CD14-positive monocyte (primary cell): ENCODE measurements at regions of chr20 and their contacts with region 1.

Region 1: DNA sequence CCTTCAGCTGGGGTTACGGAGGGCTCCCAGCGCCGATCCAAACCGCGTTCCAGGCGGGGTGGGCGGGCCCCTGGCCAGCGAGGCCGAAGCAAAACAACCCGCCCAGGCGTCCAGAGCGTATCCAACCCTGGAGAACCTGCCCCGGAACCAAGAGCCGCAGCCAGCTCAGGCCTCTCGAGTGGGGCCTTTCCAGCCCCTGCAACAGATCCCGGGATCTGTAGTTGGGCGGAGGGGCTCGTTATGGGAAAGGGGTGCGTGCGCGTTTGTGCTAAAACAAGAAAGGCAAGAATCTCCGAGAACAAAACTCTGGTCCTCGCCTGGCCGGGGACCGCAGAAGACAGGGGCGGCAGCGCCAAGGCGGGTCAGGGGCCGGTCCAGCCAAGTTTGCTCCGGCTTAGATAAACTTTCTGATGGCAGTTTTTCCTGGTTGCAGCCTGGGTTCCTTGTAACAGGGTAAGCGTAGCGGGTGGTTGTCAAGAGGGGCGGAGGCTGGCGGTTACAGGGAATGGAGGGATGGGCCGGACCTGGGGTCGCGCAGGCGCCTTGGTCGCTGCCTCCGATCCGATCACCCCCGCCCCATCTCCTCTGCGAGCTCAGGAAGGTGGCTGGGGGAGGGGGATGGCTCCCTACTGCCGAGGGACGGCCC is 448 bp upstream of the RIN2 start:
- DNase-seq: peak; percentile 73 to 85 (median 84)
- H3K4me3 ChIP-seq: peak overlapping the region; percentile 58 to 88 (median 66)
- H3K4me3 Mint-ChIP-seq: peak overlapping the region; percentile 94 to 98
- H3K27ac ChIP-seq: peak overlapping the region; percentile 94 to 97
- H3K27ac Mint-ChIP-seq: peak overlapping the region; percentile 89 to 98 (median 94)
- H3K4me1 ChIP-seq: peaks cover 35 to 39% of the 10 kb centered on the region in 2 donors
- H3K4me1 Mint-ChIP-seq: peaks cover 36% of the 10 kb centered on the region
- H3K27me3 ChIP-seq: no peaks in the 10 kb centered on the region
- H3K27me3 Mint-ChIP-seq: peaks cover 3 to 8% (median 4%) of the 10 kb centered on the region in 3 donors
- CTCF ChIP-seq: no peak

Region 2: GRCh38 chr20:19699180-19699971 is 58.2 kb before region 1 on chr20:
- intact Hi-C with region 1: loop called in 1 of 2 experiments (anchors 5 kb)
- DNase-seq: peak in 2 of 3 donors; percentile 16 to 57
- H3K4me3 ChIP-seq: no peak overlapping the region
- H3K4me3 Mint-ChIP-seq: no peak overlapping the region
- H3K27ac ChIP-seq: no peak overlapping the region
- H3K27ac Mint-ChIP-seq: peak overlapping the region in 1 of 7 donors; percentile 5
- H3K4me1 ChIP-seq: peaks cover 32 to 36% of the 10 kb centered on the region in 2 donors
- H3K4me1 Mint-ChIP-seq: peaks cover 38% of the 10 kb centered on the region
- H3K27me3 ChIP-seq: no peaks in the 10 kb centered on the region
- H3K27me3 Mint-ChIP-seq: peaks cover 0 to 9% (median 2%) of the 10 kb centered on the region in 3 donors
- CTCF ChIP-seq: no peak

Region 3: DNA sequence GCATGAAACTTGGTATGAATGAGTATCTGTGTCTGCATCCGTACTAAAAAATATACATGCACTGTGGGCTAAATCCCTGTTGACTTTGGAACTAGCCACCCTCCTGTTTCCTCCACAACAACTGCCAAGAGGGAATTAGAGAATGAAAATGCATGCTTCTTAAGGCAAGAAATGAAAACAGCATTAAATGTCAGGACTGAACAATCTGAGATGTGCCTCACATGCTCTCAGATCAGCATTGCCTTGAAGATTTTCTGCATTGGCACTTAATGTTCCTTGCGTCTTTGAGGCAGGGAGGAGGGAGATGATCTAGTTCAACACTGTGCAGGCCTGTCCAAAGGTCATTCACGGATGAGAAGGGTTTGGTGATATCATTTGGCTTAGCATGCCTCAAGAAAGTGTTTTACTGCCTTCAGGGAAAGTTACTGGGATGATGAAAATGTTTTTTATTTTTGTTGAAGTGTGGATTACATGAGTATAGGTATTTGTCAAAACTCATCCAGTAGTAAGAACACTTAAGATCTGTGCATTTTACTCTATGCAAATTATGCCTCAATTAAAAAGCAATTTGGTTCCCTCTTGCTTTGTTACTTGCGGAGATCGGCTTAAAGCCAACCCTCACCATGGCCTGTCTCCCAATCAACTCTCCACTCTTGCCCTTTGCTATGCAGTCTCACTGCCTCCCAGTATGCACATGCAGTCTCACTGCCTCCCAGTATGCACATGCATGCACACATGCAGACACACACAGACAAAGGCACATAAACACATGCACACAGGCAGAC is 47.1 kb before region 1 on chr20:
- intact Hi-C with region 1: no loop called
- DNase-seq: no peak
- H3K4me3 ChIP-seq: no peak overlapping the region
- H3K4me3 Mint-ChIP-seq: no peak overlapping the region
- H3K27ac ChIP-seq: no peak overlapping the region
- H3K27ac Mint-ChIP-seq: no peak overlapping the region
- H3K4me1 ChIP-seq: peaks cover 19 to 21% of the 10 kb centered on the region in 2 donors
- H3K4me1 Mint-ChIP-seq: no peaks in the 10 kb centered on the region
- H3K27me3 ChIP-seq: no peaks in the 10 kb centered on the region
- H3K27me3 Mint-ChIP-seq: peaks cover 0 to 2% (median 1%) of the 10 kb centered on the region in 3 donors
- CTCF ChIP-seq: no peak

Region 4: DNA sequence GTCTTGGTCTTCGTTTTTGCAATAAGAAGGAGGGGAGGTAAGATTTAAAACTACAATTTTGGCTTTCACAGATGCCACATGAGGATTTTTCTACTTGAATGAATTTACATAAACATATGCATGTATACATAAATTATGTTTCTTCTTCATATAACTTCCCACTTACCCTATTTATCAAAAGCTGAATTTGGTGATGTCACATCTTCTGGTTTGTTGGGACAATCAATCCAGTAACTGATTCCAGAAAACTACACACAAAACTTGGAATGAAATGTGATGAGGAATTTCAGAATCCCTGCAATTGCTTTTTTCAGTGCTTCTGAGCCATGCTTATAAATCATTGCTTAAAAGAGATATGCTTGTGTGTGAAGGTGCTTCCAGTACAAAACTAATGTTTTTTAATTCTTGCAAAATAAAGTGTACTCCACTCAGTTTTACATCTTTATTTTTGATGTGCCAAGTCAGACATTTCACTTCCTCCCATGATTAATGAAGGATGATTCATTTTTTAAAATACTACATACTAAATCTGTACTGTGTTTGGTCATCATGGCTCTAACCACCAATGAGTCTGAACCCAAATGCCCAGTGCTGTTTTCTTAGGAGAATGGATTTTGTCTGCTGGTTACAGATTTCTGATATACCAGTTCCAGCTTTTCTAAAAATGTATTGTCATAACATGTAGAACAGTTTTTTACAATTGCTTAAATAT is 31.6 kb before region 1 on chr20:
- intact Hi-C with region 1: loop called in 1 of 2 experiments (anchors 5 kb)
- DNase-seq: peak; percentile 59 to 80 (median 78)
- H3K4me3 ChIP-seq: no peak overlapping the region
- H3K4me3 Mint-ChIP-seq: no peak overlapping the region
- H3K27ac ChIP-seq: peak overlapping the region in 1 of 2 donors; percentile 70
- H3K27ac Mint-ChIP-seq: peak overlapping the region; percentile 31 to 83 (median 74)
- H3K4me1 ChIP-seq: peaks cover 28 to 33% of the 10 kb centered on the region in 2 donors
- H3K4me1 Mint-ChIP-seq: peaks cover 32% of the 10 kb centered on the region
- H3K27me3 ChIP-seq: no peaks in the 10 kb centered on the region
- H3K27me3 Mint-ChIP-seq: peaks cover under 1 to 5% (median 3%) of the 10 kb centered on the region in 3 donors
- CTCF ChIP-seq: no peak

Region 5: DNA sequence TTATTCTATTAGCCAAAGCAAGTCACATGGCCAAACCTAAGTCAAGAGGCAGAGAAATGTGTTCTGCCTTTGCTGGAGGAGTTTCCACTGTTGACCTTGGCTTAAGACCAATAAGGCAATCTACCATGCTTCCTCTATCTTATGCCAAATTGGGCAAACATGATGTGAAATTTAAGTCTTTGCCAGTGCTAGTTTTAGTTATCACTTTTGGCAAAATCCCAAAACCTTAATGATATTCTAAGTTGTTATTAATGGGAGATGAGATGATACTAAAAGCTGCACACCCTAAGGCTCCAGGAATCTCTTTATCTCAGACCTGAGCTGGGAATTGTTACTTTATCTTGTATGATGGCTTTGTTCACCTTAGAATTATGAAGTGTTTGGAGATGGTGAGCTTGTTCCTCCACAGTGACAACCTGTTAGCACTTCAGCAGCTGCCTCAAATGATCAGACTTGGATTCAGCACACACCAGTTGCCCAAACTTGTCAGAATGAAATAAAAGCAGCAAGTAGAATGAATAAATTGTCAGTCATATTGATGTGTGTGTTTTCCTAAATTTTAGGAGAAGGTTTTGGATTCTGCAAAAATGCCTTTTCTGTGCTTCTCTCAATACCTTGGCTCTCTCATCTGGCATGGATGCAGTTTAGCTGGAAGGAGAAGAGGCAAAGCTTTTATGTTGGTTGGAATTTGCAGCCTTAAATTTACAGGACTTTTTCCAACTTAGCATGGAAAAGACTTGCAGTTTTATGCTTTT is 49.8 kb after region 1 on chr20:
- intact Hi-C with region 1: no loop called
- DNase-seq: no peak
- H3K4me3 ChIP-seq: no peak overlapping the region
- H3K4me3 Mint-ChIP-seq: no peak overlapping the region
- H3K27ac ChIP-seq: no peak overlapping the region
- H3K27ac Mint-ChIP-seq: no peak overlapping the region
- H3K4me1 ChIP-seq: peaks cover 0 to 2% of the 10 kb centered on the region in 2 donors
- H3K4me1 Mint-ChIP-seq: peaks cover 10% of the 10 kb centered on the region
- H3K27me3 ChIP-seq: no peaks in the 10 kb centered on the region
- H3K27me3 Mint-ChIP-seq: peaks cover 0 to 2% (median 0%) of the 10 kb centered on the region in 3 donors
- CTCF ChIP-seq: no peak